Calu3 (cell line): ENCODE measurements at regions of chr13 and their contacts with region 1.

Region 1: DNA sequence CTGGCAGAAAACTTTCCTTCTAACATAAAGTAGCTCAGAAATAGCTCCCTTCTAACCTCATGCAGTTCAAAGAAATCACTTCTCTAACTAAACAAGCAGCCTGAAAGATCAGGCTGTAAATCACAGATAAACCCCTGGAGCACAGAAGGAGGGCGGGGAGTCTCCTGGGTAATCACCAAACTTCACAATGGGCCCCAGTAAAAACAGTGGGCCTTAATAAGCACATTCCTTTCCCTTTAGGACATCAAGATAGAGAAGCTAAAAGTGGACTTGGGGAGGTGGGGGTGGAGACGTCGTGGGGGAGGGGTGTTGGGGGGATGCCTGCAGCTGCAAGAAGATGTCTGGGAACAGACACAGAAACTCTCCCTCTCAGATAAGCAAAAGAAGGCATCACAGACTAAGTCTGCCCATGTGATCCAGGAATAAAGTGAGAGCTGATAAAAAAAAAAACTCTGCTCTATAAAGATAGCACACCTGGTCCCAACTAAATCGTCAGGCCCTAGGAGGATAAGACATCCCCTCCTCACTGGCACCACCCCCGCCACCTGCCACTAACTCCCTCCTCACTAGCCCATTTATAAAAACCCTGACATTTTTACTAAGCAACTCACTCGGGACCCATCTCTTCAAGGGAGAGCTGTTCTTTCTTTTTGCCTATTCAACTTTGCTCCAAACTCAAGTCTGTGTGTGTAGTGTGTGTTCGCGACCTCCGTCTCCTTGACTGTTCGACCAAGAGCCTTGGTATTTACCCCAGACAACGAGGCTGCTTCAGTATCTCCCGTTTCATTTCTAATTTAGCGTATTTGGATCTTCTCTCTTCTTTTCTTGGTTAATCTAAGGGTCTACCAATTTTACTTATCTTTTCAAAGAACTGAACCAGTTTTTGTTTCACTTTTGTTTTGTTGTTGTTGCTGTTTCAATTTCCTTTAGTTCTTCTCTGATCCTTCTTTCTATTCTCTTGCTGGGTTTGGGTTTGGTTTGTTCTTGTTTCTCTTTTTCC is 31.7 kb downstream of the DNAJC15 start:
- DNase-seq: peak; percentile 16
- H3K4me3 Mint-ChIP-seq: no peak overlapping the region
- H3K27ac Mint-ChIP-seq: no peak overlapping the region
- H3K4me1 Mint-ChIP-seq: peaks cover 39% of the 10 kb centered on the region
- H3K27me3 Mint-ChIP-seq: no peaks in the 10 kb centered on the region
- CTCF ChIP-seq: no peak

Region 2: DNA sequence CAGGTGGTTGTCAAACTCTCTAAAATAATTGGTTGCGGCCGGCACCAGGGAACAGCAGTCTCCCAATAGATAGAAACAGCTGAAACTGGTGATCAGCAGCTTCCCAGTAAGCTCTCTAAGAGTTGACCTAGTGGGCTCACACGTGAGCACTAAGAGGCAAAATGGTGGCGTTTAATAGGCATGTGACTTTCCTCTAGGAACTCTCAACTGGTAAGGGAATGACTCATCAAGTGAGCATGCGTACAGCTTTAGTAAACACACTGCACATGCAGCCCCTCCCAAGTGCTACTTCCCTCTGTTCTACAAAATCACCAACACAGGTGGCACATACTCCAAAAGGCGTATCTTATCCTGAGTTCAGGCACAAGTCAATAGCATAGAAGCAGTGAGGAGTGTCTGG is 439.4 kb before region 1 on chr13:
- CTCF ChIA-PET with region 1: no interaction called
- intact Hi-C with region 1: no loop called
- DNase-seq: no peak
- H3K4me3 Mint-ChIP-seq: no peak overlapping the region
- H3K27ac Mint-ChIP-seq: no peak overlapping the region
- H3K4me1 Mint-ChIP-seq: no peaks in the 10 kb centered on the region
- H3K27me3 Mint-ChIP-seq: peaks cover 53% of the 10 kb centered on the region
- CTCF ChIP-seq: no peak

Region 3: GRCh38 chr13:42969558-42970172 is 85.4 kb before region 1 on chr13:
- CTCF ChIA-PET with region 1: interaction called, 3 read pairs
- intact Hi-C with region 1: loop called (anchors 5 kb)
- DNase-seq: peak; percentile 82
- H3K4me3 Mint-ChIP-seq: no peak overlapping the region
- H3K27ac Mint-ChIP-seq: peak overlapping the region; percentile 75
- H3K4me1 Mint-ChIP-seq: peaks cover 33% of the 10 kb centered on the region
- H3K27me3 Mint-ChIP-seq: no peaks in the 10 kb centered on the region
- CTCF ChIP-seq: peak; percentile 80

Region 4: DNA sequence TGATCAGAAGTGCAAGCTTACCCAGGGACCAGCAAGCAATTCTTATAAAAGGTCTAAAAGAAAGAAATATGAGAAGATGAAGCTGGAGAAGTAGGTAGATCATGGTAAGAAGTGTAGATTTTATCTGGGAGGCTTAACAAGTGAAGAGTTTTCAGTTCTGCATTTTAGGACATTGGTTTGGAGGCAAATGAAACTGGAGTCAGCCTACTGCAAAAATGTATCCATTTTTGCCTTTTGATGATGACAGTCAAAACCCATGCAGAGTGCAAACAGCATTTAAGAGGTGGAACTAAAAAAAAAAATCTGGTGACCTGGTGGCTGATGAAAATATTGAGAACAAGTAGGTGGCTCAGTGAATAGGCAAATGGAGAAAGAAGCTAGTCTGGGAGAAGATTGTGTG is 185.2 kb after region 1 on chr13:
- CTCF ChIA-PET with region 1: no interaction called
- intact Hi-C with region 1: no loop called
- DNase-seq: no peak
- H3K4me3 Mint-ChIP-seq: no peak overlapping the region
- H3K27ac Mint-ChIP-seq: no peak overlapping the region
- H3K4me1 Mint-ChIP-seq: no peaks in the 10 kb centered on the region
- H3K27me3 Mint-ChIP-seq: peaks cover 29% of the 10 kb centered on the region
- CTCF ChIP-seq: no peak

Region 5: GRCh38 chr13:43448605-43449336 is 393.7 kb after region 1 on chr13:
- CTCF ChIA-PET with region 1: no interaction called
- intact Hi-C with region 1: no loop called
- DNase-seq: no peak
- H3K4me3 Mint-ChIP-seq: no peak overlapping the region
- H3K27ac Mint-ChIP-seq: no peak overlapping the region
- H3K4me1 Mint-ChIP-seq: no peaks in the 10 kb centered on the region
- H3K27me3 Mint-ChIP-seq: peaks cover 12% of the 10 kb centered on the region
- CTCF ChIP-seq: no peak